ENCODE measurements at regions of chr19 and their contacts with region 1.

Region 1: GRCh38 chr19:18192673-18193387 is at the start of gene MPV17L2:
- DNase-seq: peak; percentile 100
- H3K4me3 Mint-ChIP-seq: peak within 1 kb of the TSS; percentile 83
- H3K27ac Mint-ChIP-seq: peak within 1 kb of the TSS; percentile 90
- H3K4me1 Mint-ChIP-seq: peaks cover 19% of the 10 kb centered on the region
- H3K27me3 Mint-ChIP-seq: no peaks in the 10 kb centered on the region
- total RNA-seq, gene MPV17L2: 6.3 to 6.5 TPM

Region 2: DNA sequence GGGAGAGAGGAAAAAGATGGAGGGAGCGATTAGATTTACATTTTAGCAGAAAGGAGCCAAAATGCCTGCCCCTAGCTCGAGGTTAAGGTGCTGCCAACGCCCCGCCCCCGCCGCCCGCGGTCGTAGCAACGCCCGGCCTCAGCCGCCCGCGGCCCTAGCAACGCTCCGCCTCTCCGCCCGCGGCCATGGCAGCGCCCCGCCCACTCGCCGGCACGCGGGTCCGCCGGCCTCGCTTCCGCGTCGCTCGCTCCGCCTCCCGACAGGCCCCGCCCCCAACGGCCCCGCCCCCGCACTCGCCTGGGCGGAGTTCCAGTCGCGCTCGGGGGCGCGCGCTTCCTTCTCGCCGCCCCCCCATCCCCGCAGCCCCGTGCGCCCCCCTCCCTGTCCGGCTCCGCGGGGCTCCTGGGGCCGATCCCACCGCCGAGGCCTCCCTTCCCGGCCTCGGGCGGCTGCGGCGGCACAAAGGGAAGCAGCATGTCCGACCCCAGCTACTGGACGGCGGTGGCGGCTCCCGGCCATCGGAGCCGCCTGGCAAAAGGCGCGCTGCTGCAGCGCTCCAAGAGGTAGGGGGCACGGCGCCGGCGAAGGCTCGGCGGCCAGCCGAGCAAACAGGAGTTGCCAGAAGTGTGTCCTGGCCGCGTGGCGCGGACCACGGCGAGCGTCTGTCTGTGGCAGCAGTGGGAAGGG is 75.0 kb before region 1 on chr19:
- CTCF ChIA-PET with region 1: no interaction called
- intact Hi-C with region 1: loop called (anchors 1 kb)
- DNase-seq: peak; percentile 94
- H3K4me3 Mint-ChIP-seq: peak overlapping the region; percentile 73
- H3K27ac Mint-ChIP-seq: peak overlapping the region; percentile 37
- H3K4me1 Mint-ChIP-seq: peaks cover 32% of the 10 kb centered on the region
- H3K27me3 Mint-ChIP-seq: no peaks in the 10 kb centered on the region

Region 3: GRCh38 chr19:18160493-18160970 is 32.3 kb before region 1 on chr19:
- CTCF ChIA-PET with region 1: no interaction called
- intact Hi-C with region 1: no loop called
- DNase-seq: peak; percentile 32
- H3K4me3 Mint-ChIP-seq: peak overlapping the region; percentile 76
- H3K27ac Mint-ChIP-seq: no peak overlapping the region
- H3K4me1 Mint-ChIP-seq: peaks cover 10% of the 10 kb centered on the region
- H3K27me3 Mint-ChIP-seq: no peaks in the 10 kb centered on the region

Region 4: DNA sequence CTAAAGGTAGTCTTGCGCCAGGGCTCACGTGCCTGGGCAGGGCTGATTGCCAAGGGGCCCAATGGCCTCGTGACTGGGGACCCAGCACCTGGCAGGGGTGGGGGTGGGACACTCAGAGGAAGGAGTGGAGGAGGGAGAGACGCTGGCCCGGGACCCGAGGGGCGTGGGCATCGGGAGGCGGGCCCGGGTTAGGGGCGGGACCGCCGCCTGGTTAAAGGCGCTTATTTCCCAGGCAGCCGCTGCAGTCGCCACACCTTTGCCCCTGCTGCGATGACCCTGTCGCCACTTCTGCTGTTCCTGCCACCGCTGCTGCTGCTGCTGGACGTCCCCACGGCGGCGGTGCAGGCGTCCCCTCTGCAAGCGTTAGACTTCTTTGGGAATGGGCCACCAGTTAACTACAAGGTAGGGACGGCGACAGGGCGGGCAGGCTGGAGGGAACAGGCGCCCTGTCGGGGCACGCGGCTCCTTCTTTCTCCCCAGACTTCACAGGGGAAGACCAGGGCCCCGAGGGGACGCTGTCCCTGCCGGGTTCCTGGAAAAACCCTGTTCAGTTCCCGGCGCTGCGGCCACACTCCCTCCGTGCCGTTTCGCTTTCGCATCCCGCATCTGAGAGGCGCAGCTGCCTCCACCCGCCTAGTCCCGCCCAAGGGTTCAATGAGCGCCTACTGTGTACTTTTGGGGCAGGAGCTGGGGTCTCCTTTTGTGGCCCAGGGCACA is 19.1 kb before region 1 on chr19 and contains the start of gene IFI30:
- CTCF ChIA-PET with region 1: interaction called, 3 read pairs
- intact Hi-C with region 1: loop called (anchors 1 kb)
- DNase-seq: peak; percentile 68
- H3K4me3 Mint-ChIP-seq: peak within 1 kb of the TSS; percentile 81
- H3K27ac Mint-ChIP-seq: no peak within 1 kb of the TSS
- H3K4me1 Mint-ChIP-seq: peaks cover 6% of the 10 kb centered on the region
- H3K27me3 Mint-ChIP-seq: no peaks in the 10 kb centered on the region
- total RNA-seq, gene IFI30: 19.0 to 20.8 TPM

Region 5: DNA sequence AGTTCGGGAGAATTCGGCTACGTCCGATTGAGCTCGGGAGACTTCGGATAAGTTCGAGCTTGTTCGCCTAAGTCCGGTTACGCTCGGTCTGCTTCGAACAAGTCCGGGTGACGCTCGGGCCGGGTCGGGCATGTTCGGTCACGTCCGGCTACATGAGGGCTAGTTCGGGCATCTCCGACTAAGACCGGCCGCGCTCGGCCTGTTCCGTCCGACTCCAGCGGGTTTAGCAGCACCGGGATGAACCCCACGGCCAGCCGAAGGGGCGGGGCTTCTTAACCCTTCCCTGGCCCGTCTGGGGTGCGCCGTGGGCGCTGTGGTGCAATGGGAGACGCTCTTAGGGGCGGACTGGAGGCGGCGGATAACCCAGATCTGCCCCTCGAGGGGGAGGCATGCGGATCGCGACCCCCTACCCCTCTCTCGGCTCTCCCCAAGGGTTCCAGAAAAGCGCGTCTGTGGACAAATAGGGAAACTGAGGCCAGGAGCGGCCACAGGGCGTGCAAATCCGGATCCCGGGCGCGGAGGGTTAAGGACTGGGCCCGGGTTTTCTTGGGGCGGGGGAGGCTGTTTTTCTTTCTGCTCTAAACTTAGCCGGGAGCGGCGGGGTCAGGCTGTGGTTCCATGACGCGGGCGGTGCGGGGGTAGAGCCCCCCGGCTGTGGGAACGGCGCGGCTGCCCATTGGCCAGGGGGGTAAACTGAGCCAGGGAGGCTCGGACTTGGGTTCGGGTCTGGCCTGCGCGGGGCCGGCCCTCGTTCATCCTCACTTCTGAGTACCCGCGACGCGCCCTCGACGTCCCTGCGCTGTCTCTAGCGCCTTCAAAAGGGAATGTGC is 31.9 kb after region 1 on chr19:
- CTCF ChIA-PET with region 1: interaction called, 3 read pairs
- intact Hi-C with region 1: loop called (anchors 2 kb)
- DNase-seq: peak; percentile 97
- H3K4me3 Mint-ChIP-seq: peak overlapping the region; percentile 76
- H3K27ac Mint-ChIP-seq: no peak overlapping the region
- H3K4me1 Mint-ChIP-seq: peaks cover 27% of the 10 kb centered on the region
- H3K27me3 Mint-ChIP-seq: peaks cover 58% of the 10 kb centered on the region

Region 6: GRCh38 chr19:18322759-18323460 is 130.1 kb after region 1 on chr19 and contains the start of gene LSM4:
- CTCF ChIA-PET with region 1: no interaction called
- intact Hi-C with region 1: loop called (anchors 1 kb)
- DNase-seq: peak; percentile 100
- H3K4me3 Mint-ChIP-seq: peak within 1 kb of the TSS; percentile 93
- H3K27ac Mint-ChIP-seq: peak within 1 kb of the TSS; percentile 98
- H3K4me1 Mint-ChIP-seq: peaks cover 51% of the 10 kb centered on the region
- H3K27me3 Mint-ChIP-seq: no peaks in the 10 kb centered on the region
- total RNA-seq, gene LSM4: 439 to 451 TPM

Measured in activated naive CD4-positive, alpha-beta T cell treated with anti-CD3 and anti-CD28 coated beads for 36 hours (primary cell).